ENCODE measurements at regions of chr19 and their contacts with region 1.

Region 1: GRCh38 chr19:40348125-40348913 is at the starts of genes C19orf47 and PLD3:
- DNase-seq: peak; percentile 93 to 100 (median 98)
- ATAC-seq: peak; percentile 90
- H3K4me3 ChIP-seq: peak within 1 kb of the TSS; percentile 68
- H3K4me3 Mint-ChIP-seq: peak within 1 kb of the TSS; percentile 96
- H3K27ac ChIP-seq: peak within 1 kb of the TSS; percentile 51 to 67
- H3K27ac Mint-ChIP-seq: peak within 1 kb of the TSS; percentile 89
- H3K4me1 ChIP-seq: peaks cover 25% of the 10 kb centered on the region
- H3K4me1 Mint-ChIP-seq: peaks cover 46% of the 10 kb centered on the region
- H3K27me3 ChIP-seq: no peaks in the 10 kb centered on the region
- H3K27me3 Mint-ChIP-seq: no peaks in the 10 kb centered on the region
- CTCF ChIP-seq: no peak
- total RNA-seq, gene C19orf47: 10.1 to 11.2 TPM
- total RNA-seq, gene PLD3: 56.1 to 58.3 TPM

Region 2: GRCh38 chr19:40285353-40286234 is 62.7 kb before region 1 on chr19:
- CTCF ChIA-PET with region 1: no interaction called
- POLR2A ChIA-PET with region 1: interaction called, 11 read pairs
- intact Hi-C with region 1: loop called (anchors 1 to 2 kb)
- DNase-seq: peak; percentile 94 to 100 (median 98)
- ATAC-seq: peak; percentile 75
- H3K4me3 ChIP-seq: peak overlapping the region; percentile 68
- H3K4me3 Mint-ChIP-seq: peak overlapping the region; percentile 89
- H3K27ac ChIP-seq: peak overlapping the region; percentile 78 to 90
- H3K27ac Mint-ChIP-seq: peak overlapping the region; percentile 93
- H3K4me1 ChIP-seq: peaks cover 52% of the 10 kb centered on the region
- H3K4me1 Mint-ChIP-seq: peaks cover 46% of the 10 kb centered on the region
- H3K27me3 ChIP-seq: no peaks in the 10 kb centered on the region
- H3K27me3 Mint-ChIP-seq: no peaks in the 10 kb centered on the region
- CTCF ChIP-seq: no peak

Region 3: GRCh38 chr19:40383668-40384248 is 35.4 kb after region 1 on chr19:
- CTCF ChIA-PET with region 1: no interaction called
- POLR2A ChIA-PET with region 1: no interaction called
- intact Hi-C with region 1: no loop called
- DNase-seq: no peak
- ATAC-seq: no peak
- H3K4me3 ChIP-seq: no peak overlapping the region
- H3K4me3 Mint-ChIP-seq: no peak overlapping the region
- H3K27ac ChIP-seq: no peak overlapping the region
- H3K27ac Mint-ChIP-seq: no peak overlapping the region
- H3K4me1 ChIP-seq: no peaks in the 10 kb centered on the region
- H3K4me1 Mint-ChIP-seq: no peaks in the 10 kb centered on the region
- H3K27me3 ChIP-seq: no peaks in the 10 kb centered on the region
- H3K27me3 Mint-ChIP-seq: no peaks in the 10 kb centered on the region
- CTCF ChIP-seq: no peak

Region 4: GRCh38 chr19:40444192-40445028 is 96.1 kb after region 1 on chr19 and contains the start of gene SERTAD3:
- CTCF ChIA-PET with region 1: no interaction called
- POLR2A ChIA-PET with region 1: interaction called, 16 read pairs
- intact Hi-C with region 1: loop called in 1 of 2 experiments (anchors 1 kb)
- DNase-seq: peak; percentile 93 to 98 (median 96)
- ATAC-seq: peak; percentile 66
- H3K4me3 ChIP-seq: peak within 1 kb of the TSS; percentile 75
- H3K4me3 Mint-ChIP-seq: peak within 1 kb of the TSS; percentile 96
- H3K27ac ChIP-seq: peak within 1 kb of the TSS; percentile 81 to 86
- H3K27ac Mint-ChIP-seq: peak within 1 kb of the TSS; percentile 86
- H3K4me1 ChIP-seq: peaks cover 18% of the 10 kb centered on the region
- H3K4me1 Mint-ChIP-seq: peaks cover 18% of the 10 kb centered on the region
- H3K27me3 ChIP-seq: no peaks in the 10 kb centered on the region
- H3K27me3 Mint-ChIP-seq: no peaks in the 10 kb centered on the region
- CTCF ChIP-seq: no peak
- total RNA-seq, gene SERTAD3: 17.4 to 19.2 TPM

Region 5: GRCh38 chr19:40529093-40529954 is 181.0 kb after region 1 on chr19:
- CTCF ChIA-PET with region 1: no interaction called
- POLR2A ChIA-PET with region 1: no interaction called
- intact Hi-C with region 1: no loop called
- DNase-seq: peak; percentile 82 to 95 (median 89)
- ATAC-seq: peak; percentile 91
- H3K4me3 ChIP-seq: peak overlapping the region; percentile 54
- H3K4me3 Mint-ChIP-seq: peak overlapping the region; percentile 74
- H3K27ac ChIP-seq: no peak overlapping the region
- H3K27ac Mint-ChIP-seq: no peak overlapping the region
- H3K4me1 ChIP-seq: peaks cover 16% of the 10 kb centered on the region
- H3K4me1 Mint-ChIP-seq: peaks cover 17% of the 10 kb centered on the region
- H3K27me3 ChIP-seq: peaks cover 23% of the 10 kb centered on the region in 2 experiments
- H3K27me3 Mint-ChIP-seq: peaks cover 35% of the 10 kb centered on the region
- CTCF ChIP-seq: peak; percentile 95

Region 6: GRCh38 chr19:40570313-40571004 is 222.1 kb after region 1 on chr19:
- CTCF ChIA-PET with region 1: no interaction called
- POLR2A ChIA-PET with region 1: interaction called, 3 read pairs
- intact Hi-C with region 1: loop called in 1 of 2 experiments (anchors 5 kb)
- DNase-seq: peak; percentile 88 to 100 (median 96)
- ATAC-seq: peak; percentile 86
- H3K4me3 ChIP-seq: peak overlapping the region; percentile 40
- H3K4me3 Mint-ChIP-seq: peak overlapping the region; percentile 80
- H3K27ac ChIP-seq: peak overlapping the region in 1 of 2 donors; percentile 9
- H3K27ac Mint-ChIP-seq: peak overlapping the region; percentile 22
- H3K4me1 ChIP-seq: peaks cover 35% of the 10 kb centered on the region
- H3K4me1 Mint-ChIP-seq: peaks cover 27% of the 10 kb centered on the region
- H3K27me3 ChIP-seq: peaks cover 21 to 22% of the 10 kb centered on the region in 2 experiments
- H3K27me3 Mint-ChIP-seq: peaks cover 34% of the 10 kb centered on the region
- CTCF ChIP-seq: no peak

Region 7: GRCh38 chr19:42325273-42325895 is 1977.1 kb after region 1 on chr19 and contains the start of gene MEGF8:
- CTCF ChIA-PET with region 1: no interaction called
- POLR2A ChIA-PET with region 1: no interaction called
- intact Hi-C with region 1: loop called in 1 of 2 experiments (anchors 10 kb)
- DNase-seq: peak; percentile 97 to 99 (median 98)
- ATAC-seq: peak; percentile 95
- H3K4me3 ChIP-seq: peak within 1 kb of the TSS; percentile 84
- H3K4me3 Mint-ChIP-seq: peak within 1 kb of the TSS; percentile 94
- H3K27ac ChIP-seq: peak within 1 kb of the TSS; percentile 46 to 55
- H3K27ac Mint-ChIP-seq: peak within 1 kb of the TSS; percentile 50
- H3K4me1 ChIP-seq: peaks cover 26% of the 10 kb centered on the region
- H3K4me1 Mint-ChIP-seq: peaks cover 25% of the 10 kb centered on the region
- H3K27me3 ChIP-seq: peaks cover 16 to 21% of the 10 kb centered on the region in 2 experiments
- H3K27me3 Mint-ChIP-seq: peaks cover 25% of the 10 kb centered on the region
- CTCF ChIP-seq: peak; percentile 90
- total RNA-seq, gene MEGF8: 4.1 to 4.2 TPM

Measured in CD4-positive, alpha-beta T cell (primary cell).